ENCODE measurements at regions of chr17 and their contacts with region 1.

Region 1: GRCh38 chr17:27323524-27324206 is 29.8 kb downstream of the WSB1 start:
- DNase-seq: no peak
- ATAC-seq: no peak
- H3K4me3 ChIP-seq: no peak overlapping the region
- H3K4me3 Mint-ChIP-seq: no peak overlapping the region
- H3K27ac ChIP-seq: no peak overlapping the region
- H3K27ac Mint-ChIP-seq: no peak overlapping the region
- H3K4me1 ChIP-seq: peaks cover 4% of the 10 kb centered on the region
- H3K4me1 Mint-ChIP-seq: no peaks in the 10 kb centered on the region
- H3K27me3 ChIP-seq: no peaks in the 10 kb centered on the region
- H3K27me3 Mint-ChIP-seq: no peaks in the 10 kb centered on the region
- CTCF ChIP-seq: no peak

Region 2: GRCh38 chr17:27345141-27345904 is 21.7 kb after region 1 on chr17:
- CTCF ChIA-PET with region 1: no interaction called
- POLR2A ChIA-PET with region 1: no interaction called
- intact Hi-C with region 1: loop called in 1 of 2 experiments (anchors 2 kb)
- DNase-seq: no peak
- ATAC-seq: no peak
- H3K4me3 ChIP-seq: no peak overlapping the region
- H3K4me3 Mint-ChIP-seq: no peak overlapping the region
- H3K27ac ChIP-seq: no peak overlapping the region
- H3K27ac Mint-ChIP-seq: no peak overlapping the region
- H3K4me1 ChIP-seq: peaks cover 5% of the 10 kb centered on the region
- H3K4me1 Mint-ChIP-seq: peaks cover 7% of the 10 kb centered on the region
- H3K27me3 ChIP-seq: peaks cover 0 to 5% of the 10 kb centered on the region in 2 experiments
- H3K27me3 Mint-ChIP-seq: no peaks in the 10 kb centered on the region
- CTCF ChIP-seq: no peak

Region 3: DNA sequence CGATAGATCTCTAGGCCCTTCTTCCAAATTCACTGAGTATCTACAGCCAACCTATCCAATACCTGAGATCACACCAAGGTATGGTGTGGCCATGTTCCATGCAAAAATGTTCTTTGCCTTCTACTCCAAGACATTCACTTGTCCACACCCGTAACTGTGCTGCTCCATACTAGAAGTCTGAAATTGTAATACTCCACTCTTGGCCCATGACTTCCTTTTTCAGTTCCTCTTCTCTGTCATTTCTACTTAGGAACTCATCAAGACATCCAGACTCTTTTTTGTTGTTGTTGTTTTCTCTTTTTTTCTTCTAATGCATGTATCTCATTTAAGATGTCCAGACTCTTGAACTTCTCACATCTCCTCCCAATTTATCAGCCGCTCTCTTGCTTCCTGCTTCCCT is 90.1 kb after region 1 on chr17:
- CTCF ChIA-PET with region 1: no interaction called
- POLR2A ChIA-PET with region 1: no interaction called
- intact Hi-C with region 1: no loop called
- DNase-seq: peak in 1 of 14 experiments; percentile 19
- ATAC-seq: no peak
- H3K4me3 ChIP-seq: no peak overlapping the region
- H3K4me3 Mint-ChIP-seq: no peak overlapping the region
- H3K27ac ChIP-seq: no peak overlapping the region
- H3K27ac Mint-ChIP-seq: no peak overlapping the region
- H3K4me1 ChIP-seq: no peaks in the 10 kb centered on the region
- H3K4me1 Mint-ChIP-seq: no peaks in the 10 kb centered on the region
- H3K27me3 ChIP-seq: no peaks in the 10 kb centered on the region
- H3K27me3 Mint-ChIP-seq: no peaks in the 10 kb centered on the region
- CTCF ChIP-seq: no peak

Measured in CD4-positive, alpha-beta T cell (primary cell).